ENCODE measurements at regions of chr2 and their contacts with region 1.

Region 1: GRCh38 chr2:61460163-61460562 is 10.7 kb downstream of the USP34 start:
- DNase-seq: no peak
- ATAC-seq: no peak
- H3K4me3 ChIP-seq: no peak overlapping the region
- H3K27ac ChIP-seq: no peak overlapping the region
- H3K4me1 ChIP-seq: peaks cover 8% of the 10 kb centered on the region; the same call in 1 of the 2 replicates
- H3K27me3 ChIP-seq: no peaks in the 10 kb centered on the region
- CTCF ChIP-seq: no peak

Region 2: DNA sequence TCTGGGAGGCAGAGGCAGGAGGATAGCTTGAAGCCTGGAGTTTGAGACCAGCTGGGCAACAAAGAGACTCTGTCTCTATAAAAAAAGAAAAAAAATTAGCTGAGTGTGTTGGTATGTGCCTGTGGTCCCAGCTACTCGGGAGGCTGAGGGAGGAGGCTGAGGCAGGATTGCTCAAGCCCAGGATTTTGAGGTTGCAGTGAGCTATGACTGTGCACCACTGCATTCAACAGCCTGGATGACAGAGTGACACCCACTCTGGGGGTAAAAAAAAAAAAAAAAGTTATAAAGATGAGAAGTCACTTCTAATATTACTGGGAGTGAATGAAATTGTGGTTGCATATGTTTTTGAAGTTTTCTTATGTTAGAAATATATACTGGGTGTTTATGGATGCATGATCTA is 226.6 kb before region 1 on chr2:
- CTCF ChIA-PET with region 1: no interaction called
- POLR2A ChIA-PET with region 1: interaction called, 10 read pairs
- in situ Hi-C with region 1: no loop called
- intact Hi-C with region 1: no loop called
- DNase-seq: no peak
- ATAC-seq: no peak; the same call in 1 of the 2 replicates
- H3K4me3 ChIP-seq: no peak overlapping the region
- H3K27ac ChIP-seq: no peak overlapping the region
- H3K4me1 ChIP-seq: no peaks in the 10 kb centered on the region
- H3K27me3 ChIP-seq: no peaks in the 10 kb centered on the region
- CTCF ChIP-seq: no peak